ENCODE measurements at regions of chr6 and their contacts with region 1.

Region 1: GRCh38 chr6:158686791-158687381 is 37.0 kb downstream of the SYTL3 start:
- DNase-seq: peak; percentile 84 to 92 (median 87)
- H3K4me3 ChIP-seq: peak overlapping the region in 1 of 2 donors; percentile 25
- H3K4me3 Mint-ChIP-seq: peak overlapping the region; percentile 53 to 91 (median 80)
- H3K27ac ChIP-seq: peak overlapping the region; percentile 85
- H3K27ac Mint-ChIP-seq: peak overlapping the region; percentile 98 to 100 (median 100)
- H3K4me1 ChIP-seq: peaks cover 65% of the 10 kb centered on the region
- H3K4me1 Mint-ChIP-seq: peaks cover 43 to 77% (median 58%) of the 10 kb centered on the region in 4 donors
- H3K27me3 ChIP-seq: no peaks in the 10 kb centered on the region
- H3K27me3 Mint-ChIP-seq: no peaks in the 10 kb centered on the region

Region 2: GRCh38 chr6:156848533-156848932 is 1838.4 kb before region 1 on chr6:
- CTCF ChIA-PET with region 1: no interaction called
- POLR2A ChIA-PET with region 1: no interaction called
- intact Hi-C with region 1: no loop called
- DNase-seq: no peak
- H3K4me3 ChIP-seq: no peak overlapping the region
- H3K4me3 Mint-ChIP-seq: no peak overlapping the region
- H3K27ac ChIP-seq: no peak overlapping the region
- H3K27ac Mint-ChIP-seq: peak overlapping the region in 3 of 7 donors; percentile 4 to 50 (median 33)
- H3K4me1 ChIP-seq: peaks cover 96% of the 10 kb centered on the region
- H3K4me1 Mint-ChIP-seq: peaks cover 59 to 98% (median 85%) of the 10 kb centered on the region in 4 donors
- H3K27me3 ChIP-seq: no peaks in the 10 kb centered on the region
- H3K27me3 Mint-ChIP-seq: no peaks in the 10 kb centered on the region

Region 3: DNA sequence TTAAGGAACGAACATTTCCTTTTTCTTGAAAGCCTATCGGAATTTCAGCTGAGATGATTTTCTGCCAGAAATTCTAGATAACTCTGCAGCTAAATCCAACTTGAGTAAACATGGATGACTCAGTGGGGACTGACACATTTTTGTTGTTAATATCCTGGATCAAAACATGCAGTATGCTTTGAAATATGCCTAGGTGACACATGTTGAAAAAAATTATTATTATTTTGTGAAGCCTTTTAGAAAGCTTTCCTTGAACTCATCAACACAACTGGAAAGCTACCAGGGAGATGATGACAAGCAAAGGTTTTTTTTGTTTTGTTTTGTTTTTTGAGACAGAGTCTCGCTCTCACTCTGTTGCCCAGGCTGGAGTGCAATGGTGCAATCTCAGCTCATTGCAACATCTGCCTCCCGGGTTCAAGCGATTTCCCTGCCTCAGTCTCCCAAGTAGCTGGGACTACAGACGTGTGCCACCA is 1003.9 kb before region 1 on chr6:
- CTCF ChIA-PET with region 1: no interaction called
- POLR2A ChIA-PET with region 1: no interaction called
- intact Hi-C with region 1: no loop called
- DNase-seq: no peak
- H3K4me3 ChIP-seq: no peak overlapping the region
- H3K4me3 Mint-ChIP-seq: no peak overlapping the region
- H3K27ac ChIP-seq: no peak overlapping the region
- H3K27ac Mint-ChIP-seq: no peak overlapping the region
- H3K4me1 ChIP-seq: no peaks in the 10 kb centered on the region
- H3K4me1 Mint-ChIP-seq: no peaks in the 10 kb centered on the region
- H3K27me3 ChIP-seq: no peaks in the 10 kb centered on the region
- H3K27me3 Mint-ChIP-seq: peaks cover 0 to 1% of the 10 kb centered on the region in 2 donors

Region 4: DNA sequence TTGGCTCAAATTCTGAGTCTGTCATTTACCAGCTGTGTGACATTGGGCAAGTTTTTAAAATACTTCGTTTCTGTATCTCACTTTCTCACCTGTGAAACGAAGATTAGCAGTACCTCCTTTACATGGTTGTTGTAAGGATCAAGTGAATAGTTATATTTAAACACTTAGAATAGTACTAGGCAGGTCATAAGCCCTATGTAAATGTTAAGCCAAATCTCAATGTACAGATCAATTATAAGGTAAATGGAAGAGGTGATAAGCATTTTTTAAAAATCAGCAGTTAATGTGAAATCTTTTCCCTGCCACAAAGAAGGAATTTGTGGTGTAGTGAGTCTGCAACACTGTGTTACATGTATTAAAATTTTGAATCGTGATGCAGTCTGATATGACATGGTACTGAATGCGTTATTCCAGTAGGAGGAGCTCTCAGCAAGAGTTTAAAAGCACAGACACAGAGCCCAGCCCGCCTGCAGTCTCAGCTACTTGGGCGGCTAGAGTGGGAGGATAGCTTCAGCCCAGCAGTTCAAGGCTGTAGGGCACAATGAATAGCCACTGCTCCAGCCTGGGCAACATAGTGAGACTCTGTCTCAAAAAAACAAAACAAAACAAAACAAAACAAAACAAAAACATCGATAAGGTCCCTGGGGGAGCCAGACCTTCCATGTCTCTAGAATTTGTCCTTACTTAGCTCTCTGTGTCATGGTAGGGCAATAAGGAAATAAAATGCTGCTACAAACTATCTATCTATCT is 472.8 kb before region 1 on chr6:
- CTCF ChIA-PET with region 1: interaction called, 36 read pairs
- POLR2A ChIA-PET with region 1: no interaction called
- intact Hi-C with region 1: loop called (anchors 1 kb)
- DNase-seq: peak; percentile 42 to 58 (median 55)
- H3K4me3 ChIP-seq: no peak overlapping the region
- H3K4me3 Mint-ChIP-seq: no peak overlapping the region
- H3K27ac ChIP-seq: no peak overlapping the region
- H3K27ac Mint-ChIP-seq: peak overlapping the region in 1 of 7 donors; percentile 49
- H3K4me1 ChIP-seq: no peaks in the 10 kb centered on the region
- H3K4me1 Mint-ChIP-seq: peaks cover 0 to 4% (median 1%) of the 10 kb centered on the region in 4 donors
- H3K27me3 ChIP-seq: no peaks in the 10 kb centered on the region
- H3K27me3 Mint-ChIP-seq: peaks cover 0 to 3% of the 10 kb centered on the region in 2 donors

Region 5: DNA sequence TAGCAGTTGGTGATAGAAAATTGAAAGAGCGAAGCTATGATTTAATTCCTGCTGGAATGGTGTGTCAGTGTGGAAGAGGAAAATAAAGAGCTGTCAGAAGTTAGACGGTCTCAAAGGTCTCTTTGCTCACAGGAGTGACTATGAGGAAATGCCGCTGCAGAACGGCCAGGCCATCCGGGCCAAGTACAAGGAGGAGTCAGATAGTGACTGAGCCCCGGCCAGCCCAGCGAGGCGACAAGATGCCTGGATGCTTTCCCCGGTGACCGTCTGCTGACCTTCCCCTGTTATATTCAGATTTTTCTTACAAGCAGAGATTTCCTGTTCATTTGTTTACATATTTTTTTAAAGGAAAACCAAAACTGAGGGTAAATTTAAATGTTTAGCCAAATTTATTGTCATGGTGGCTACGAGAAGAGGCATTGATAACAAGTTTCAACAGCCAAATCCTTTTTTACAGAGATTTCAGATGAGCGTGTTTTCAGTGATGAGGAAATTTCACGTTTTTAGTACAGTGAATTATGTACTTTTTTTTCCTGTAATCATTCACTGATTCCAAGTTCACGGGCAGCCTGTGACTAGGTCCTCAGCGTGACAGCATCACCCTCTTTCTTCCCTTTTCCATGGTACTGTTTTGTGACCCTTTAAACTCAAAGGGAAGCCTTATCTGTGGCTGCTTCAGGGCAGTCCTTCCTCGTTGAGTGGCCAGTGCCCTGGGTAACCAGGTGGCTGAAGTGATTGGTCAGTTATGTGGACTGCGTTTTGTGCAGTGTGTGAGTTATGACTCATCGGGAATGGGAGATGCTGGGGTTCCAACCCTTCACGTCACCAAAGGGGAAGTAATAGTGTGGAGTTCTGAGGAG is 55.0 kb before region 1 on chr6:
- CTCF ChIA-PET with region 1: interaction called, 20 read pairs
- POLR2A ChIA-PET with region 1: interaction called, 4 read pairs
- intact Hi-C with region 1: loop called (anchors 1 kb)
- DNase-seq: peak in 1 of 5 donors; percentile 12
- H3K4me3 ChIP-seq: no peak overlapping the region
- H3K4me3 Mint-ChIP-seq: no peak overlapping the region
- H3K27ac ChIP-seq: no peak overlapping the region
- H3K27ac Mint-ChIP-seq: peak overlapping the region; percentile 68 to 96 (median 94)
- H3K4me1 ChIP-seq: peaks cover 31% of the 10 kb centered on the region
- H3K4me1 Mint-ChIP-seq: peaks cover 24 to 52% (median 40%) of the 10 kb centered on the region in 4 donors
- H3K27me3 ChIP-seq: no peaks in the 10 kb centered on the region
- H3K27me3 Mint-ChIP-seq: no peaks in the 10 kb centered on the region

Region 6: GRCh38 chr6:158649289-158650143 is 37.4 kb before region 1 on chr6 and contains the start of gene SYTL3:
- CTCF ChIA-PET with region 1: interaction called, 34 read pairs
- POLR2A ChIA-PET with region 1: interaction called, 28 read pairs
- intact Hi-C with region 1: loop called (anchors 1 kb)
- DNase-seq: peak; percentile 92 to 94 (median 92)
- H3K4me3 ChIP-seq: peak within 1 kb of the TSS in 1 of 2 donors; percentile 26
- H3K4me3 Mint-ChIP-seq: peak within 1 kb of the TSS; percentile 69 to 89 (median 84)
- H3K27ac ChIP-seq: peak within 1 kb of the TSS; percentile 66
- H3K27ac Mint-ChIP-seq: peak within 1 kb of the TSS; percentile 82 to 98 (median 94)
- H3K4me1 ChIP-seq: peaks cover 57% of the 10 kb centered on the region
- H3K4me1 Mint-ChIP-seq: peaks cover 49 to 77% (median 58%) of the 10 kb centered on the region in 4 donors
- H3K27me3 ChIP-seq: no peaks in the 10 kb centered on the region
- H3K27me3 Mint-ChIP-seq: no peaks in the 10 kb centered on the region
- total RNA-seq, gene SYTL3: 22.2 to 24.3 TPM

Region 7: GRCh38 chr6:158674342-158675131 is 12.3 kb before region 1 on chr6:
- CTCF ChIA-PET with region 1: interaction called, 17 read pairs
- POLR2A ChIA-PET with region 1: interaction called, 3 read pairs
- intact Hi-C with region 1: no loop called
- DNase-seq: no peak
- H3K4me3 ChIP-seq: no peak overlapping the region
- H3K4me3 Mint-ChIP-seq: peak overlapping the region in 1 of 8 donors; percentile 46
- H3K27ac ChIP-seq: no peak overlapping the region
- H3K27ac Mint-ChIP-seq: peak overlapping the region in 5 of 7 donors; percentile 13 to 55 (median 36)
- H3K4me1 ChIP-seq: no peaks in the 10 kb centered on the region
- H3K4me1 Mint-ChIP-seq: peaks cover 0 to 8% (median 4%) of the 10 kb centered on the region in 4 donors
- H3K27me3 ChIP-seq: no peaks in the 10 kb centered on the region
- H3K27me3 Mint-ChIP-seq: no peaks in the 10 kb centered on the region

Region 8: GRCh38 chr6:158972241-158973233 is 285.7 kb after region 1 on chr6:
- CTCF ChIA-PET with region 1: interaction called, 14 read pairs
- POLR2A ChIA-PET with region 1: no interaction called
- intact Hi-C with region 1: no loop called
- DNase-seq: peak in 4 of 5 donors; percentile 57 to 66 (median 60)
- H3K4me3 ChIP-seq: no peak overlapping the region
- H3K4me3 Mint-ChIP-seq: no peak overlapping the region
- H3K27ac ChIP-seq: no peak overlapping the region
- H3K27ac Mint-ChIP-seq: peak overlapping the region in 2 of 7 donors; percentile 31 to 47
- H3K4me1 ChIP-seq: no peaks in the 10 kb centered on the region
- H3K4me1 Mint-ChIP-seq: peaks cover 0 to 3% (median 0%) of the 10 kb centered on the region in 4 donors
- H3K27me3 ChIP-seq: no peaks in the 10 kb centered on the region
- H3K27me3 Mint-ChIP-seq: no peaks in the 10 kb centered on the region

Region 9: DNA sequence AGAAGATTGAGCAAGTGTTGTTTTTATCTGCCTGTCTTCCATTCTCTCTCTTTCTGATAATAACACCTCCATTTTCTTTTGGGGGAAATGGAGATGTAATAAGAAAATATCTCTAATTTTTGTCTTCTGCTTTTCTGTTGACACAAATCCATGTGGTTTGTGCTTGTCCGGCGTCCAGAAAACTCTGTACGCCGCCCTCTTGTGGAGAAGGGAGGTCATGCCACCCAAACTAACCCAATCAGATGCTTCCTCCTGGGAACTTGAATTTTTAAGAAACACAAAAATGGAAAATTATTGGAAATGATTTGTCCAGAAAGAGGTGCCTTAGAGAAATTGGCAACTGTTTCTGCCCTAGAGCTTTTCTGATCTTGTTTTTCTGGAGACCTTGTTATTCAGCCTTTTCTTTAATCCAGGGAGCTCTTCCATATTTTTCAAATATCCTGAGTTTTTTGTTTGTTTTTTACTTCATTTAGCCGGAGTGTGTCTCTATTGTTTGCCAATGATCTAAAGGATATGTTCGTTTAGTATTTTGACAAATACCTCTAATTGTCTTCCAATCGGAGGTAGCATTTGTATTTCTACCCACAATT is 464.5 kb after region 1 on chr6:
- CTCF ChIA-PET with region 1: no interaction called
- POLR2A ChIA-PET with region 1: no interaction called
- intact Hi-C with region 1: no loop called
- DNase-seq: peak in 3 of 5 donors; percentile 24 to 30 (median 25)
- H3K4me3 ChIP-seq: no peak overlapping the region
- H3K4me3 Mint-ChIP-seq: no peak overlapping the region
- H3K27ac ChIP-seq: no peak overlapping the region
- H3K27ac Mint-ChIP-seq: peak overlapping the region in 1 of 7 donors; percentile 28
- H3K4me1 ChIP-seq: no peaks in the 10 kb centered on the region
- H3K4me1 Mint-ChIP-seq: peaks cover 0 to 4% (median 2%) of the 10 kb centered on the region in 4 donors
- H3K27me3 ChIP-seq: no peaks in the 10 kb centered on the region
- H3K27me3 Mint-ChIP-seq: peaks cover 2 to 3% of the 10 kb centered on the region in 2 donors